ENCODE measurements at regions of chr18 and their contacts with region 1.

Region 1: GRCh38 chr18:24837066-24837465 is 376.6 kb downstream of the HRH4 start:
- DNase-seq: no peak
- ATAC-seq: no peak
- H3K4me3 ChIP-seq: no peak overlapping the region
- H3K27ac ChIP-seq: no peak overlapping the region
- H3K4me1 ChIP-seq: no peaks in the 10 kb centered on the region
- H3K27me3 ChIP-seq: no peaks in the 10 kb centered on the region; a peak in 1 of 5 replicates
- CTCF ChIP-seq: no peak
- EP300 ChIP-seq: no peak
- POLR2A ChIP-seq: no peak
- RAD21 ChIP-seq: no peak

Region 2: GRCh38 chr18:24695168-24695567 is 141.9 kb before region 1 on chr18:
- CTCF ChIA-PET with region 1: no interaction called
- POLR2A ChIA-PET with region 1: no interaction called
- in situ Hi-C with region 1: no loop called
- intact Hi-C with region 1: no loop called
- DNase-seq: no peak
- ATAC-seq: no peak
- H3K4me3 ChIP-seq: no peak overlapping the region
- H3K27ac ChIP-seq: no peak overlapping the region
- H3K4me1 ChIP-seq: no peaks in the 10 kb centered on the region
- H3K27me3 ChIP-seq: no peaks in the 10 kb centered on the region
- CTCF ChIP-seq: no peak
- EP300 ChIP-seq: no peak
- POLR2A ChIP-seq: no peak
- RAD21 ChIP-seq: no peak

Region 3: DNA sequence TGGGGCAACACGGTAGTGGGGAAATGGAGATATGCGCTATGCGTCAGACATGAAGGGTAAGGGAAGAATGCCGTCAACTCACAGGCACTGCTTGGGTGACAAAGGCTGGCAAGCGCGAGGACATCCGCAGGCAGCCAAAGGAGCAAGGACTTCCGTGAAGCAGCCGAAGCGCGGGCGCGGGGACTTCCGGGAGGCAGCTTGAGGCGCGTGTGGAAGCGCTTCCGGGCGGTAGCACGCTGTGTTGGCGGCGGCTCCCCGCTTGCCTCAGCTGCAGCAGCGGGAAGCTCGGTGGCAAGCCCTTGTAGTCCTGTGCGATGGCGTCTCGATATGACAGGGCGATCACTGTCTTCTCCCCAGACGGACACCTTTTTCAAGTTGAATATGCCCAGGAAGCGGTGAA is 1296.6 kb after region 1 on chr18 and contains the start of gene PSMA8:
- CTCF ChIA-PET with region 1: no interaction called
- POLR2A ChIA-PET with region 1: no interaction called
- in situ Hi-C with region 1: loop called (anchors 25 kb)
- intact Hi-C with region 1: no loop called
- DNase-seq: no peak
- ATAC-seq: peak; percentile 47
- H3K4me3 ChIP-seq: no peak within 1 kb of the TSS
- H3K27ac ChIP-seq: no peak within 1 kb of the TSS
- H3K4me1 ChIP-seq: peaks cover 0 to 4% of the 10 kb centered on the region in 2 experiments; a peak in 2 of 5 replicates
- H3K27me3 ChIP-seq: peaks cover 0 to 8% of the 10 kb centered on the region in 2 experiments; a peak in 1 of 5 replicates
- CTCF ChIP-seq: no peak
- EP300 ChIP-seq: no peak
- POLR2A ChIP-seq: no peak
- RAD21 ChIP-seq: no peak
- polyA plus RNA-seq, gene PSMA8: not detected

Measured in K562 (cell line).